CD14-positive monocyte (primary cell): ENCODE measurements at regions of chr19 and their contacts with region 1.

Region 1: GRCh38 chr19:51986309-51987291 is at the start of gene ZNF350:
- DNase-seq: peak; percentile 93 to 96 (median 95)
- H3K4me3 ChIP-seq: peak within 1 kb of the TSS; percentile 85 to 98 (median 89)
- H3K4me3 Mint-ChIP-seq: peak within 1 kb of the TSS; percentile 95 to 100
- H3K27ac ChIP-seq: peak within 1 kb of the TSS; percentile 62 to 97
- H3K27ac Mint-ChIP-seq: peak within 1 kb of the TSS; percentile 74 to 97 (median 94)
- H3K4me1 ChIP-seq: peaks cover 11 to 13% of the 10 kb centered on the region in 2 donors
- H3K4me1 Mint-ChIP-seq: peaks cover 11% of the 10 kb centered on the region
- H3K27me3 ChIP-seq: no peaks in the 10 kb centered on the region
- H3K27me3 Mint-ChIP-seq: peaks cover 0 to 3% (median 2%) of the 10 kb centered on the region in 3 donors
- CTCF ChIP-seq: no peak
- polyA plus RNA-seq, gene ZNF350: 9.1 to 14.0 (median 9.9) TPM

Region 2: GRCh38 chr19:51887522-51888498 is 98.8 kb before region 1 on chr19 and contains the start of gene ZNF577:
- intact Hi-C with region 1: loop called in 1 of 2 experiments (anchors 5 kb)
- DNase-seq: peak; percentile 59 to 73 (median 71)
- H3K4me3 ChIP-seq: peak within 1 kb of the TSS; percentile 44 to 81 (median 67)
- H3K4me3 Mint-ChIP-seq: peak within 1 kb of the TSS; percentile 98 to 99
- H3K27ac ChIP-seq: peak within 1 kb of the TSS; percentile 22 to 71
- H3K27ac Mint-ChIP-seq: peak within 1 kb of the TSS in 6 of 7 donors; percentile 62 to 91 (median 78)
- H3K4me1 ChIP-seq: peaks cover 4 to 12% of the 10 kb centered on the region in 2 donors
- H3K4me1 Mint-ChIP-seq: peaks cover 17% of the 10 kb centered on the region
- H3K27me3 ChIP-seq: no peaks in the 10 kb centered on the region
- H3K27me3 Mint-ChIP-seq: peaks cover 0 to 3% (median 3%) of the 10 kb centered on the region in 3 donors
- CTCF ChIP-seq: no peak
- polyA plus RNA-seq, gene ZNF577: 1.5 to 8.5 (median 1.5) TPM

Region 3: GRCh38 chr19:51904331-51905165 is 82.1 kb before region 1 on chr19 and contains the start of gene ZNF649:
- intact Hi-C with region 1: loop called in 1 of 2 experiments (anchors 5 kb)
- DNase-seq: peak; percentile 76 to 83 (median 80)
- H3K4me3 ChIP-seq: peak within 1 kb of the TSS; percentile 80 to 99 (median 98)
- H3K4me3 Mint-ChIP-seq: peak within 1 kb of the TSS; percentile 100
- H3K27ac ChIP-seq: peak within 1 kb of the TSS; percentile 67 to 90
- H3K27ac Mint-ChIP-seq: peak within 1 kb of the TSS; percentile 90 to 96 (median 93)
- H3K4me1 ChIP-seq: peaks cover 7 to 16% of the 10 kb centered on the region in 2 donors
- H3K4me1 Mint-ChIP-seq: peaks cover 19% of the 10 kb centered on the region
- H3K27me3 ChIP-seq: peaks cover 0 to 4% of the 10 kb centered on the region in 2 donors
- H3K27me3 Mint-ChIP-seq: peaks cover 3 to 22% (median 20%) of the 10 kb centered on the region in 3 donors
- CTCF ChIP-seq: no peak
- polyA plus RNA-seq, gene ZNF649: 1.9 to 4.8 (median 3.9) TPM

Region 4: GRCh38 chr19:51926784-51927742 is 59.5 kb before region 1 on chr19 and contains the start of gene ZNF613:
- intact Hi-C with region 1: loop called in 1 of 2 experiments (anchors 5 kb)
- DNase-seq: peak; percentile 77 to 84 (median 84)
- H3K4me3 ChIP-seq: peak within 1 kb of the TSS; percentile 91 to 99 (median 96)
- H3K4me3 Mint-ChIP-seq: peak within 1 kb of the TSS; percentile 97 to 98
- H3K27ac ChIP-seq: peak within 1 kb of the TSS; percentile 36 to 90
- H3K27ac Mint-ChIP-seq: peak within 1 kb of the TSS; percentile 84 to 95 (median 91)
- H3K4me1 ChIP-seq: peaks cover 13 to 21% of the 10 kb centered on the region in 2 donors
- H3K4me1 Mint-ChIP-seq: peaks cover 19% of the 10 kb centered on the region
- H3K27me3 ChIP-seq: no peaks in the 10 kb centered on the region
- H3K27me3 Mint-ChIP-seq: peaks cover 0 to 1% (median 1%) of the 10 kb centered on the region in 3 donors
- CTCF ChIP-seq: no peak
- polyA plus RNA-seq, gene ZNF613: 0.96 to 3.1 (median 1.1) TPM

Region 5: GRCh38 chr19:52007806-52008557 is 21.4 kb after region 1 on chr19 and contains the start of gene ZNF615:
- intact Hi-C with region 1: loop called in 1 of 2 experiments (anchors 2 kb)
- DNase-seq: peak; percentile 82 to 85 (median 82)
- H3K4me3 ChIP-seq: peak within 1 kb of the TSS; percentile 74 to 84 (median 80)
- H3K4me3 Mint-ChIP-seq: peak within 1 kb of the TSS; percentile 97 to 98
- H3K27ac ChIP-seq: peak within 1 kb of the TSS; percentile 72 to 96
- H3K27ac Mint-ChIP-seq: peak within 1 kb of the TSS; percentile 92 to 99 (median 98)
- H3K4me1 ChIP-seq: peaks cover 7 to 12% of the 10 kb centered on the region in 2 donors
- H3K4me1 Mint-ChIP-seq: peaks cover 15% of the 10 kb centered on the region
- H3K27me3 ChIP-seq: no peaks in the 10 kb centered on the region
- H3K27me3 Mint-ChIP-seq: peaks cover 0 to 3% (median 2%) of the 10 kb centered on the region in 3 donors
- CTCF ChIP-seq: no peak
- polyA plus RNA-seq, gene ZNF615: 1.8 to 2.4 (median 2.2) TPM

Region 6: DNA sequence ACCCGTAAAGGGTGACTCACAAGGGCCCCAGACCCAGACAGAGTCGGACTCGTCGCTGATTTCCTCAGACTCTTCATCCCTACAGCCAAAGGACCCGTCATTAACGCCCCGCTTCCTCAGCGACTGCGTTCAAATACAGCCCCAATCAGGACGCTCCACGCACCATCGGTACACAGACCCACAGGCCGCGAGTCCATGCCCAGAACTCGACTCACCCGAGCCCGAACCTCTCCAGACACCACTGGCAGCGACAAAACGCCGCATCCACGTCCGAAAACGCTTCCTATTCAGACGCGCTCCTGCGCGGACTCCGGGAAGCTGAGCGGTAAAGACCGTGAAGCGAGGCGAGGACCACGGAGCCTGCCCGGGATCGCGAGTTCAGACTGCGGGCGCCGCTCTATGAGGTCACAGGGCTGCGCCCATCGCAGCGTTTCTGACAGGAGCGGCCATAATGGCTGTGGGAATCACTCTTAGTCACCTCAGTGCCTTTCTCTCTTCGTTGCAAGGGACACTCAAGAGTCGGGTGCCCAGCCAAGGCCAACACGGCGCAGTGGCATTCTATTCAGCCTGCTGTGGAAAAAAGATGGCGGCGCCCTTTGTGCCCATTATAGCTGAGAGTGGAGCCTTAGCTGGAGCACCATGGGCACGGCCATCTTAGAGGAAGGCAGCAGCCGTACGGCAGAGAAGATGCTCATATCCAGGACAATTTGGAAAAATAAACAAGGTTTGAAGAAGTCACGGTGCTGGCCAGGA is 41.6 kb after region 1 on chr19 and contains the start of gene ZNF614:
- intact Hi-C with region 1: loop called in 1 of 2 experiments (anchors 5 kb)
- DNase-seq: peak; percentile 85 to 92 (median 87)
- H3K4me3 ChIP-seq: peak within 1 kb of the TSS; percentile 81 to 90 (median 84)
- H3K4me3 Mint-ChIP-seq: peak within 1 kb of the TSS; percentile 92 to 98
- H3K27ac ChIP-seq: peak within 1 kb of the TSS; percentile 95 to 98
- H3K27ac Mint-ChIP-seq: peak within 1 kb of the TSS; percentile 95 to 99 (median 98)
- H3K4me1 ChIP-seq: peaks cover 11 to 17% of the 10 kb centered on the region in 2 donors
- H3K4me1 Mint-ChIP-seq: peaks cover 21% of the 10 kb centered on the region
- H3K27me3 ChIP-seq: no peaks in the 10 kb centered on the region
- H3K27me3 Mint-ChIP-seq: no peaks in the 10 kb centered on the region
- CTCF ChIP-seq: no peak
- polyA plus RNA-seq, gene ZNF614: 0.65 to 3.1 (median 1.0) TPM

Region 7: DNA sequence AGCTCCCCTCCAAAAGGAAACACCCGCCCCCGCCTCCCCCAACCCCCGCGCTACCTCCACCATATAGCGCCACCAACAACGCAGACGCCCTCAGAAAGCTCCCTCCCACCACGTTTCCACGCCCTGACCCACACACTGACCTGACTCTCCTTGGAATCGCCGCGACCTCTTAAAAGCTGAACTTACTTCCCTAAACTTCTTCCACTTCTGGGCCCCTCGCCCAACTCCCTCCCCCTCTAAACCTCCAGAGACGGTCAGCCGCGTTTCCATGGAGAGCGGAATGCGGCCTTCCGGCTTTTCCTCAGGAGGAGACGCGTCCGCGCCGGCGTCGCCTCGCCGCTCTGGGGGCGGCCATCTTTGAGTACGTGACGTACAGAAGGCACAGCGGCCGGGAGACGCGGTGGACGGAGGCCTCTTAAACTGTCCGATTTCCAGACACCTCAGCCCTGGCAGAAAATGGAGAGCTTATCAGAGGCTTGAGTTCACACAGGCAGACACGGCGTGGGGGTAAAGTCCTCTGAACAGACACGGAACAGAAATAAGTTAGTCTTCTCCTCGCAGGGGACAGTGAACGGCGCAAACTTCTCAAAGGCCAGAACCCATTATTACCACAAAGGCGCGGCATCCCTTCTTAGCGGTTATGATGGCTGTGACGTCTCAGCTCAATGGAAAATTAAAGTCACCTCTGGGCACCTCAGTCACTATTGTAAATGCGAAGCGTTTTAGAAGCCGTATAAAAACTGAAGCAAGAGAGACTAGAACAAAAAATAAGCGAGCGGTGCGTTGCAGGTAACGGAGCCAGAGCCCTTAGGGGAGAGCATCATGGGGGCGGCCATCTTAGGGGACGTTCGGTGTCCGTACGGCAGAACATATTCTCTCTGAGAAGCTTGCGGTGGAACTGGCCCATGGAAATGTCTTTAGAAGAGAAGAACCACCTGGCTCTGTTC is 62.2 kb after region 1 on chr19 and contains the start of gene ZNF432:
- intact Hi-C with region 1: loop called (anchors 1 to 5 kb)
- DNase-seq: peak; percentile 92 to 95 (median 94)
- H3K4me3 ChIP-seq: peak within 1 kb of the TSS; percentile 69 to 94 (median 92)
- H3K4me3 Mint-ChIP-seq: peak within 1 kb of the TSS; percentile 98 to 99
- H3K27ac ChIP-seq: peak within 1 kb of the TSS; percentile 93 to 96
- H3K27ac Mint-ChIP-seq: peak within 1 kb of the TSS; percentile 97 to 100 (median 99)
- H3K4me1 ChIP-seq: peaks cover 11 to 13% of the 10 kb centered on the region in 2 donors
- H3K4me1 Mint-ChIP-seq: peaks cover 11% of the 10 kb centered on the region
- H3K27me3 ChIP-seq: no peaks in the 10 kb centered on the region
- H3K27me3 Mint-ChIP-seq: peaks cover 0 to 2% (median 0%) of the 10 kb centered on the region in 3 donors
- CTCF ChIP-seq: no peak
- polyA plus RNA-seq, gene ZNF432: 1.1 to 3.0 (median 1.2) TPM